ENCODE measurements at regions of chr20 and their contacts with region 1.

Region 1: GRCh38 chr20:11917663-11918062 is at the start of gene BTBD3:
- DNase-seq: no peak
- H3K4me3 Mint-ChIP-seq: no peak within 1 kb of the TSS
- H3K27ac Mint-ChIP-seq: no peak within 1 kb of the TSS
- H3K4me1 Mint-ChIP-seq: no peaks in the 10 kb centered on the region
- H3K27me3 Mint-ChIP-seq: no peaks in the 10 kb centered on the region
- CTCF ChIP-seq: no peak
- total RNA-seq, gene BTBD3: 29.6 and 38.2 TPM in 2 replicates

Region 2: DNA sequence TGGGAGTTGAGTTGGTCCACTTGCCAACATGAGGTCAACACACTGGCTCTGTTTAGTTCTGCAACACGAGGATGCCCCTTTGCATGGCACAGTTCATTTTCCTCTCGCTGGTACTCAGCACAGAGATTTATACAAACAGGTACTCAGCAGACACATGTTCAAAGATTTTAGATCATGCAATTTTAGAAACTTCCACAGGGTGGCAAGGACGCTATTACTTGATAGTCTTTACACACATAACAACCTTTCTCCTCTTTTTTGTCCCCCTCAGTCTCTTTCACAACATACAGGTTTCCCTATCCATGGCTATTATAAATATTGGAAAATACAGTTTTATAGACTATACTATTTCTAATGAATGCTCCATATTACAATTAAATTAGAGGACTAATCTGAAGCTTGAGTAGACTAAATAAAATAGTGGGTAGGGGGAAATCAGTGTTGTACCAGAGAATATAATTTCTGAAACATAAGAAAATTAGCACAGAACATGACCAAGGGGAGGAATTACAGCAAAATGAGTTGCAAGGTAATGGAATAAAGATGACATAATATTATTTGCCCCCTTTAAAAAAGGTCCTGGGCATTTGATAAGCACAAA is 331.8 kb before region 1 on chr20:
- CTCF ChIA-PET with region 1: no interaction called
- intact Hi-C with region 1: loop called (anchors 10 kb)
- DNase-seq: peak; percentile 10
- H3K4me3 Mint-ChIP-seq: no peak overlapping the region
- H3K27ac Mint-ChIP-seq: no peak overlapping the region
- H3K4me1 Mint-ChIP-seq: no peaks in the 10 kb centered on the region
- H3K27me3 Mint-ChIP-seq: no peaks in the 10 kb centered on the region
- CTCF ChIP-seq: no peak

Region 3: GRCh38 chr20:11755071-11755841 is 162.4 kb before region 1 on chr20:
- CTCF ChIA-PET with region 1: no interaction called
- intact Hi-C with region 1: no loop called
- DNase-seq: no peak
- H3K4me3 Mint-ChIP-seq: no peak overlapping the region
- H3K27ac Mint-ChIP-seq: no peak overlapping the region
- H3K4me1 Mint-ChIP-seq: no peaks in the 10 kb centered on the region
- H3K27me3 Mint-ChIP-seq: no peaks in the 10 kb centered on the region
- CTCF ChIP-seq: no peak

Measured in Calu3 (cell line).